Tibial artery (tissue), 4 donors: ENCODE measurements at regions of chr22 and their contacts with region 1.

Region 1: GRCh38 chr22:22767876-22768602 is 119.6 kb upstream of the IGLL5 start:
- DNase-seq: peak in 1 of 2 donors; percentile 41
- H3K4me3 ChIP-seq: no peak overlapping the region
- H3K27ac ChIP-seq: no peak overlapping the region
- H3K4me1 ChIP-seq: no peaks in the 10 kb centered on the region
- H3K27me3 ChIP-seq: peaks cover 0 to 9% of the 10 kb centered on the region in 2 donors
- CTCF ChIP-seq: no peak

Region 2: GRCh38 chr22:21045585-21046294 is 1722.3 kb before region 1 on chr22 and contains the start of gene LRRC74B:
- intact Hi-C with region 1: loop called (anchors 5 kb)
- DNase-seq: peak; percentile 78 to 90
- H3K4me3 ChIP-seq: peak within 1 kb of the TSS; percentile 42 to 43
- H3K27ac ChIP-seq: peak within 1 kb of the TSS in 1 of 2 donors; percentile 23
- H3K4me1 ChIP-seq: peaks cover 0 to 26% (median 19%) of the 10 kb centered on the region in 4 donors
- H3K27me3 ChIP-seq: no peaks in the 10 kb centered on the region
- CTCF ChIP-seq: no peak

Region 3: GRCh38 chr22:22666307-22667091 is 101.5 kb before region 1 on chr22:
- intact Hi-C with region 1: no loop called
- DNase-seq: no peak
- H3K4me3 ChIP-seq: no peak overlapping the region
- H3K27ac ChIP-seq: no peak overlapping the region
- H3K4me1 ChIP-seq: no peaks in the 10 kb centered on the region
- H3K27me3 ChIP-seq: peaks cover 0 to 23% of the 10 kb centered on the region in 2 donors
- CTCF ChIP-seq: no peak